Natural killer cell (primary cell): ENCODE measurements at regions of chr6 and their contacts with region 1.

Region 1: GRCh38 chr6:90393232-90393884 is 96.7 kb upstream of the BACH2 start:
- DNase-seq: peak; percentile 61 to 89
- ATAC-seq: peak; percentile 49 to 76 (median 60)
- H3K4me3 ChIP-seq: no peak overlapping the region
- H3K4me3 Mint-ChIP-seq: no peak overlapping the region
- H3K27ac ChIP-seq: no peak overlapping the region
- H3K27ac Mint-ChIP-seq: peak overlapping the region; percentile 12 to 75
- H3K4me1 ChIP-seq: peaks cover 22% of the 10 kb centered on the region
- H3K4me1 Mint-ChIP-seq: peaks cover 30 to 35% of the 10 kb centered on the region in 2 donors
- H3K27me3 ChIP-seq: no peaks in the 10 kb centered on the region
- H3K27me3 Mint-ChIP-seq: peaks cover 0 to 4% of the 10 kb centered on the region in 2 donors
- CTCF ChIP-seq: peak; percentile 70

Region 2: GRCh38 chr6:89940225-89941027 is 452.9 kb before region 1 on chr6:
- intact Hi-C with region 1: loop called (anchors 1 kb)
- DNase-seq: peak; percentile 51 to 89
- ATAC-seq: peak; percentile 90 to 99 (median 97)
- H3K4me3 ChIP-seq: no peak overlapping the region
- H3K4me3 Mint-ChIP-seq: no peak overlapping the region
- H3K27ac ChIP-seq: no peak overlapping the region
- H3K27ac Mint-ChIP-seq: peak overlapping the region in 1 of 2 donors; percentile 20
- H3K4me1 ChIP-seq: peaks cover 5% of the 10 kb centered on the region
- H3K4me1 Mint-ChIP-seq: peaks cover 14 to 18% of the 10 kb centered on the region in 2 donors
- H3K27me3 ChIP-seq: no peaks in the 10 kb centered on the region
- H3K27me3 Mint-ChIP-seq: no peaks in the 10 kb centered on the region
- CTCF ChIP-seq: peak; percentile 77

Region 3: DNA sequence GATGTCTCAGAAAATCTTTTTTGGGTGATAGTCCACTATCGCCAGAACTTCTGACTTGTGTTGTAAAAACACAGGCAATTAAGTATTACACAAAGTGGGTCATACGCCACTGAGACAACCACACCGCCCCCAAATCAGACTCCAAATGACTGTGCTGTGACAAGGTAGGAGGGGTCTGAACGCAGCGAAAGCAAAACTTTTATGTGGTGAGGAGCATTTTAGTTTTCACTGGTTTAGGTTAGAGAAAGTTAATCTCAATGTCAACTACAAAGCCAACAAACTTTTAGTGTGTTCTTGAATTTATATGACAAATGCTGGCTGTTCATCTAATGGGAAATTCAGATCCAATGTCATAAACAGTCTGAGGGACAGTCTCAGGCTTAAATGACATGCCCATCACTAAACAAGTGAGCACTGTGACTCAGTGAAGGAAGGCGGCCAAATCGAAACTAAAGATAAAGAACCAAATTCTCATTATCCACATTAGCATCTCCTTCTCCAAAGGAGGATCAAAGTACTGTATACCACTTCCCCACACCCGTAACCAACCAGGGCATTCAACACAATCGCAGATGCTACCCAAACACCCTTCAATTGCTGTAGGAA is 312.4 kb before region 1 on chr6:
- intact Hi-C with region 1: loop called (anchors 5 kb)
- DNase-seq: peak; percentile 42 to 84
- ATAC-seq: peak; percentile 75 to 83 (median 79)
- H3K4me3 ChIP-seq: peak overlapping the region; percentile 36
- H3K4me3 Mint-ChIP-seq: peak overlapping the region; percentile 94
- H3K27ac ChIP-seq: peak overlapping the region; percentile 76
- H3K27ac Mint-ChIP-seq: peak overlapping the region; percentile 92 to 94
- H3K4me1 ChIP-seq: peaks cover 17% of the 10 kb centered on the region
- H3K4me1 Mint-ChIP-seq: peaks cover 65 to 67% of the 10 kb centered on the region in 2 donors
- H3K27me3 ChIP-seq: no peaks in the 10 kb centered on the region
- H3K27me3 Mint-ChIP-seq: no peaks in the 10 kb centered on the region
- CTCF ChIP-seq: no peak

Region 4: DNA sequence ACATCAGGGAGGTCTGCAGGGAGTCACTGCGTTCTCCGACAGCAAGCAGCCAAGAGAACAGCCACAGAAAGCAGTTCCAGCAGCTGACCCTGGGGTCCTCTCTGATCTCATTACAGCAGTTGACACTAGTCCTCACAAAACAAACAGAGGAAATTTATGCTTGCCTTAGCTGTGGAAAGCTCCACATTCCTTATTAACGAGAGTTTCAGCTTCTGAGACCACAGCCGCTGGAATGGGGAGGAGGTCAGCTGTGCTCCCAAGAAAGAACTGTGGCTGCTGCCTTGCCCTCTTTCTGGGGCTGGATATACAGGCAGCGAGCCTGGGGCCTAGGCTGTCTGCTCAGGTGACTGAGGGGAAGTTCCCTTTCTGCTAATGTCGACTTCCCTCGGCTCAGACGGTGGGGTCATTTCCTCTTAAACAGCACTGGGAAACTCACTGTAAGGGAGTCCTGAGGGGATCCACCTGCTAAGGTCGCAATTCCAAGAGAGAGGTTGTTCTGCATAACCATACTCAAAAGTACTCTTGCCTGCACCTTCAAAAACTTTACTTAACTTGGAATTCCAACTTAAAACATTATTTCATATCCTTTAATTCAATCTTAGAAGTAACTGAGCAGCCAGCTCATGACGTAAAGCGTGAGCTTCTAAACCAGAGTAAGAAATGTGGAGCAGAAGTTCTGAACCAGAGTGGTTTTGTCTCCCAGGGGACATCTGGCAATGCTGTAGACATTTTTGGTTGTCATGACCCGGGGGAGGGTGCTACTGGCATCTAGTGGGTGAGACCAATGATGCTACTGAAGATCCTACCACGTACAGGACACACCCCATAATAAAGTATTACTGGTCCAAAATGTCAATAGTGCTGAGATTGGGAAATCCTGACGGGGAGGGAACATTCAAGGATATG is 177.0 kb before region 1 on chr6:
- intact Hi-C with region 1: loop called (anchors 1 kb)
- DNase-seq: peak in 1 of 2 donors; percentile 81
- ATAC-seq: peak in 1 of 3 donors; percentile 20
- H3K4me3 ChIP-seq: no peak overlapping the region
- H3K4me3 Mint-ChIP-seq: no peak overlapping the region
- H3K27ac ChIP-seq: peak overlapping the region; percentile 82
- H3K27ac Mint-ChIP-seq: peak overlapping the region in 1 of 2 donors; percentile 63
- H3K4me1 ChIP-seq: peaks cover 36% of the 10 kb centered on the region
- H3K4me1 Mint-ChIP-seq: peaks cover 0 to 9% of the 10 kb centered on the region in 2 donors
- H3K27me3 ChIP-seq: no peaks in the 10 kb centered on the region
- H3K27me3 Mint-ChIP-seq: no peaks in the 10 kb centered on the region
- CTCF ChIP-seq: no peak

Region 5: GRCh38 chr6:90296346-90297114 is 96.8 kb before region 1 on chr6 and contains the start of gene BACH2:
- intact Hi-C with region 1: loop called (anchors 2 kb)
- DNase-seq: peak; percentile 84 to 97
- ATAC-seq: peak; percentile 68 to 81 (median 72)
- H3K4me3 ChIP-seq: peak within 1 kb of the TSS; percentile 67
- H3K4me3 Mint-ChIP-seq: peak within 1 kb of the TSS; percentile 94
- H3K27ac ChIP-seq: peak within 1 kb of the TSS; percentile 79
- H3K27ac Mint-ChIP-seq: peak within 1 kb of the TSS; percentile 83 to 86
- H3K4me1 ChIP-seq: peaks cover 19% of the 10 kb centered on the region
- H3K4me1 Mint-ChIP-seq: peaks cover 11 to 21% of the 10 kb centered on the region in 2 donors
- H3K27me3 ChIP-seq: peaks cover 3% of the 10 kb centered on the region
- H3K27me3 Mint-ChIP-seq: peaks cover 13 to 30% of the 10 kb centered on the region in 2 donors
- CTCF ChIP-seq: no peak
- total RNA-seq, gene BACH2: 32.1 to 37.8 (median 32.7) TPM

Region 6: GRCh38 chr6:90413867-90414266 is 20.5 kb after region 1 on chr6:
- intact Hi-C with region 1: loop called (anchors 1 kb)
- DNase-seq: peak; percentile 60 to 89
- ATAC-seq: peak; percentile 93 to 96 (median 96)
- H3K4me3 ChIP-seq: no peak overlapping the region
- H3K4me3 Mint-ChIP-seq: peak overlapping the region; percentile 90
- H3K27ac ChIP-seq: peak overlapping the region; percentile 9
- H3K27ac Mint-ChIP-seq: peak overlapping the region; percentile 91 to 93
- H3K4me1 ChIP-seq: peaks cover 15% of the 10 kb centered on the region
- H3K4me1 Mint-ChIP-seq: peaks cover 13 to 15% of the 10 kb centered on the region in 2 donors
- H3K27me3 ChIP-seq: no peaks in the 10 kb centered on the region
- H3K27me3 Mint-ChIP-seq: peaks cover 0 to 4% of the 10 kb centered on the region in 2 donors
- CTCF ChIP-seq: no peak

Region 7: DNA sequence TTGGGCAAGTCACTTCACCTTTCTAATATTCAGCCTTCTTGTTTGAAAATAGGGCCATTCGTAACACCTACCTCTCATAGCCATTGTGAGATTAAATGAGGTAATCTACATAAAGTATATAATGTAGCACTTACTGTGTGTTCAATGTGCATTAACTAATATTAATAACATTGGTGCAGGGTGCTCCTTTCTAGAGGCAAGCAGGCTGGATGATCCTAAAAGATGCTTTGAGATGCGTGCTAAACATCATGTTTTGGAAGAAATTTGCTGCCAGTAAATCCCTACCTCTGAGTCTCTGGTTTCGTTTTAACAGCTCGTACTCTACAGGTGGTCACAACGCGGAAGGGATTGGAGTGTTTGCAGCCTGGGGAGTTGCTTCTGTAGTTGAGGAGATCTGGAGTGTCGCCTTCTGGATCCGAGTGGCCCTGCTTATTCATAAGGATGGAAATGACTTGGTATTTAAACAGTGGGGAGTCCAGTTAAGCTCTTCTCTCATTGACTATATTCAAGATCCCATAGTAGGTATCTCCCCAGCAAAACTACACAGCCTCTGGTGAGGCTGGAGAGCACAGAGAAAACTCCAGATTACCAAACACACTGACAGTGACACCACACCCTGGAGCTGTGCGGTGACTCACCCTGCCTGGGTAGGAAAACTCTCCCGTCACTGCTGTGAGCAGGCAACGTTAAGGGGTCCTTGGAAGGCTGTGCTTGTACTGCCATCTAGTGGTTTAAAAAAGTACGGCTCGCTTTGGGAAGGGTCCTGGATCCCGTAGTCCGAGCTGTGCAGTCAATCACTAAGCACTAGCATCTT is 85.6 kb after region 1 on chr6:
- intact Hi-C with region 1: loop called (anchors 2 kb)
- DNase-seq: peak; percentile 68 to 92
- ATAC-seq: peak; percentile 92 to 97 (median 97)
- H3K4me3 ChIP-seq: no peak overlapping the region
- H3K4me3 Mint-ChIP-seq: no peak overlapping the region
- H3K27ac ChIP-seq: no peak overlapping the region
- H3K27ac Mint-ChIP-seq: peak overlapping the region in 1 of 2 donors; percentile 87
- H3K4me1 ChIP-seq: peaks cover 13% of the 10 kb centered on the region
- H3K4me1 Mint-ChIP-seq: peaks cover 11 to 12% of the 10 kb centered on the region in 2 donors
- H3K27me3 ChIP-seq: no peaks in the 10 kb centered on the region
- H3K27me3 Mint-ChIP-seq: no peaks in the 10 kb centered on the region
- CTCF ChIP-seq: peak; percentile 93